ENCODE measurements at regions of chr7 and their contacts with region 1.

Region 1: DNA sequence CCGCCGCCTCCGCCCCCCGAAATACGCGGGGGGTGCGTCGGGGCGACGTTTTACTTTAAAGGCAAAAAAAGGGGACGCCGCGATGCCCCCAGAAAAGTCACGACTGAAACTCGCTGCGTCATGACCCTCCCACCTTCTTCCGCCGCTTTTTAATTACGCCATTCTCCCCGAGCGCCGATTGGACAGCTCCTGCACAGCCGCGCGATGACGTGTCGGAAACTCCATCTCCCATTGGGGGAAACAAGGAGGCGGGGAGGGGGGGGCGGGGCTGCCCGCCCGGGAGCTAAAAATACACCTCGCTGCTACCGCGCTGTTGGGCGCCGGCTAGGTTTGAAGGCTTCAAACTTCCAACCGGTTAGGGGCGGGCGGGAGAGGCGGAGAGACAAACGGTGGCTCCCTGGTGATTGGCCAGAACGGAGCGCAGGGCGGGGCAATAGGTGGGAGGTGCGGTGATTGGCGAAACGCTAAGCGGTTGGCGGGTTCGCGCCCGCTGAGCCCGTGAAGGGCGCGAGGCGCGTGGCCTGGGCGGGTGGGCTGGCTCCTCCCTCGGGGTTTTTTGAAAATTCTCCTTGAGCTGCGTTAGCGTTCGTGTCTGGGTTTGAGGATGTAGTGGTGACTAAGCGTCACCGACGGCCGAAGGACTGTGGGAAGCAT is at the start of gene RHEB:
- DNase-seq: peak; percentile 99
- H3K4me3 ChIP-seq: peak within 1 kb of the TSS; percentile 77
- H3K27ac ChIP-seq: peak within 1 kb of the TSS; percentile 99
- H3K4me1 ChIP-seq: peaks cover 47% of the 10 kb centered on the region
- H3K27me3 ChIP-seq: no peaks in the 10 kb centered on the region
- CTCF ChIP-seq: no peak
- total RNA-seq, gene RHEB: 113 TPM

Region 2: DNA sequence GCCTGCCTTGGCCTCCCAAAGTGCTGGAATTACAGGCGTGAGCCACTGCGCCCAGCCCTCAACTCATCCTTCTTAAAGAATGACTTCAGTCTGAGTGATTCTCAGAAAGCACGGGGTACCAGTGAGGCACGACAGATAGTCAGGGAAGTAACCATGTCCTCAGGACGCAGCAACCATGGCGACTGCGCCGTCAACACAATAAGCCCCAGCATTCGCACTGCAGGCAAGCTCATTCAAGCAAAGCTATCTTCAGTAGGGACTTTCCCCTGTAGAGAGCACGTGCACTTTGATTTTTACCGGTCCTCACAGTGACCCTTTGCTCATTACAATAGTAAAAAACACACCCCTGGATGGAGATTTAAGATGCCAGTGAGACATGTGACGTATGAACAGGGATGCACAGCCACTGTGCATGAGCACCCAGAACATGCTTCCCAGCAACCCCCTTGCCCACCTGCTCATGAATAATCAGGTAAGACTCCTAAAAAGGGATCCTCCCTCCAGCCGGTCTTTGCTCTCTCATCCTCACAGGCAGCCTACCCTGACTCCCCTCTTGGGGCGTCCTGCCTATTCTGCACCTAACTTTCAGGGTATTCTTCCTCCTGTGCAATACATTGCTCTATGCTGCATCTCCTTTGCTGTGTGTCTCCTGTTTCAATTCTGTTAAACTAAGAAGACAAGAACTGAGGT is 119.1 kb before region 1 on chr7:
- intact Hi-C with region 1: no loop called
- DNase-seq: no peak
- H3K4me3 ChIP-seq: no peak overlapping the region
- H3K27ac ChIP-seq: no peak overlapping the region
- H3K4me1 ChIP-seq: no peaks in the 10 kb centered on the region
- H3K27me3 ChIP-seq: peaks cover 18% of the 10 kb centered on the region
- CTCF ChIP-seq: no peak

Region 3: DNA sequence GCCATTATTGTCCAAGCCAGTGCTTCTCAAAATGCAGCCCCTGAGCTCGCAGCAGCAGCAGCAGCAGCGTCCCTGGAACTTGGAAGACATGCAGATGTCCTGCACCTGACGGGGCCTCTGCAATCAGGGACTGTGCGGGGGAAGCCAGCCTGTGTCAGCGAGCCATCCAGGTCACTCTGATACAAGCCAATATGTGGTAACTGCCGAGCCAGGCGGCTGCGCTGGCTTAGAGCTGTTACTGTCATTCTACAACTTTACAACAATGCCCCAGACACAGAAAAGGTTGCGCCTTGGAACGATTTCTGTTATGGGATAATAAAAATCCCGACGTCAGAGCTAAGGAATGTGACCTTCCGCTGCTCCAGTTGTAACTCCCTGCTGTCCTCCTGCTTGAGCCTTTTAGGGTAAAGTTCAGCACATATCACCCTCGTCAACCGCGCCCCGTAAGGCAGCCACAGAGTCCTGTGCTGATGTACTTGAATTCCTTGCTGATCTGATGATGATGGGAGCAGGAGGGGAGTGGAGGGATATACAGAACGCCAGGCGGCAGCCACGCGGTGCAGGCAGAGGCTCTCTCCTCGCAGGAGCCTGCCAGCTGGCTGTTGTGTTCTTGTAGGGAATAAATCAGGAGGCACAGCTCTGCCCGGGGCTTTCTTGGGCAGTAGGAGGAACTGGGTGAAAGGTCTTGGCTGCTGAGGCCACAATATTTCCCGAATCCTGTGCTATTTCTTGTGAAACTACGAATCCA is 60.0 kb before region 1 on chr7:
- intact Hi-C with region 1: loop called (anchors 5 kb)
- DNase-seq: peak; percentile 77
- H3K4me3 ChIP-seq: peak overlapping the region; percentile 51
- H3K27ac ChIP-seq: peak overlapping the region; percentile 93
- H3K4me1 ChIP-seq: peaks cover 34% of the 10 kb centered on the region
- H3K27me3 ChIP-seq: no peaks in the 10 kb centered on the region
- CTCF ChIP-seq: peak; percentile 42

Measured in left ventricle myocardium inferior (tissue), 1 donor.